Psoas muscle (tissue), 8 donors: ENCODE measurements at regions of chr10 and their contacts with region 1.

Region 1: DNA sequence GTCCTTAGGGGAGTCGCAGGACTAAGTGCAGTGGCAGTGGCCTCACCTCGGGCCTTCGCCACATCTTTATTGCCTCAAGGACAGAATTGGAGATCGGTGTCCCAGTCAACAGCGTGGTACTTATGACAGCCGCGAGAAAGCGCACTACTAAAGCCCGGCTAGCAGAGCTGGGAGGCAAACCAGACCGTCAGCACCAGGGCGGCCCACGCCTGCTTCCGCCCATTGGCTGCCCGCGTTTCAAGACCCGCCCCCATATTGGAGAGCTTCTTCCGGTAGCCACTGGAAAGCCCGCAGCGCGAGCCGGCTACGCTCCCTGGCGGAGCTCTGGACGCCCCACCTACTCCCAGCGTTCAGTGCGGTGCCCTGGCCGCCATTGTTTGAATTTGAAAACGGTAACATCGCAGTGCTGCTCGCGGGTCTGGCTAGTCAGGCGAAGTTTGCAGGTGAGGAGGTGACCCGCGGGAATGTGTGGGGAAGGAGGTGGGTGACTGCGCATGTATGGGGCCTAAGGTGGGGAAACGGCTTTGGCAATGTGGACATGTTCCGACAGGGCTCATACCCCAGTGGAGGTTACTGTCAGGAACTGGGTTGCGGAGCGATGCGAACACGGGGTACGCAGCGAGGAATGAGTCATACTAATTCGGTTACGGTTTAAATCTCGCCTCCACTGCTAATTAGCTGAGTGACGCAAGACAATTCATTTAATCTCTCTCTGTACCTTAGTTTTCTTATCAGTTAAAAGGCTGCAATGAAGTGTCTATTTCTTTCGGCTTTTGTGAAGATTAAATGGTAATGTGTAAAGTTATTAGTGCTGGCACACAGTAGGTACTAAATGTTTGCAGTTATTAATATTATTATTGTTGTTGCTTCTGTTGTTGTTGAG is at the start of gene KIF20B:
- DNase-seq: peak; percentile 95 to 97
- ATAC-seq: peak; percentile 100
- H3K4me3 ChIP-seq: peak within 1 kb of the TSS; percentile 80
- H3K27ac ChIP-seq: peak within 1 kb of the TSS; percentile 84
- H3K4me1 ChIP-seq: peaks cover 10% of the 10 kb centered on the region
- H3K27me3 ChIP-seq: no peaks in the 10 kb centered on the region
- CTCF ChIP-seq: peak; percentile 57
- total RNA-seq, gene KIF20B: 0.54 to 0.84 (median 0.72) TPM

Region 2: GRCh38 chr10:89426230-89426868 is 275.1 kb before region 1 on chr10:
- intact Hi-C with region 1: loop called in 1 of 2 experiments (anchors 10 kb)
- DNase-seq: no peak
- ATAC-seq: peak; percentile 71 to 87 (median 78)
- H3K4me3 ChIP-seq: no peak overlapping the region
- H3K27ac ChIP-seq: no peak overlapping the region
- H3K4me1 ChIP-seq: peaks cover 23% of the 10 kb centered on the region
- H3K27me3 ChIP-seq: no peaks in the 10 kb centered on the region
- CTCF ChIP-seq: peak; percentile 87

Region 3: GRCh38 chr10:89591111-89591795 is 110.2 kb before region 1 on chr10:
- intact Hi-C with region 1: loop called in 1 of 2 experiments (anchors 10 kb)
- DNase-seq: peak; percentile 19 to 57
- ATAC-seq: peak; percentile 70 to 83 (median 78)
- H3K4me3 ChIP-seq: no peak overlapping the region
- H3K27ac ChIP-seq: peak overlapping the region; percentile 72
- H3K4me1 ChIP-seq: peaks cover 29% of the 10 kb centered on the region
- H3K27me3 ChIP-seq: no peaks in the 10 kb centered on the region
- CTCF ChIP-seq: no peak

Region 4: GRCh38 chr10:89633484-89633883 is 68.0 kb before region 1 on chr10:
- intact Hi-C with region 1: no loop called
- DNase-seq: no peak
- ATAC-seq: peak; percentile 96 to 98 (median 97)
- H3K4me3 ChIP-seq: peak overlapping the region; percentile 37
- H3K27ac ChIP-seq: peak overlapping the region; percentile 87
- H3K4me1 ChIP-seq: peaks cover 40% of the 10 kb centered on the region
- H3K27me3 ChIP-seq: no peaks in the 10 kb centered on the region
- CTCF ChIP-seq: no peak

Region 5: GRCh38 chr10:89643431-89644331 is 57.8 kb before region 1 on chr10:
- intact Hi-C with region 1: loop called (anchors 5 kb)
- DNase-seq: peak; percentile 60 to 84
- ATAC-seq: peak; percentile 71 to 83 (median 78)
- H3K4me3 ChIP-seq: peak overlapping the region; percentile 94
- H3K27ac ChIP-seq: peak overlapping the region; percentile 93
- H3K4me1 ChIP-seq: peaks cover 51% of the 10 kb centered on the region
- H3K27me3 ChIP-seq: no peaks in the 10 kb centered on the region
- CTCF ChIP-seq: no peak